CD8-positive, alpha-beta memory T cell (primary cell): ENCODE measurements at regions of chr3 and their contacts with region 1.

Region 1: GRCh38 chr3:183409219-183409618 is 19.2 kb downstream of the MCF2L2 start:
- DNase-seq: no peak
- H3K4me3 ChIP-seq: no peak overlapping the region
- H3K4me3 Mint-ChIP-seq: no peak overlapping the region
- H3K27ac ChIP-seq: no peak overlapping the region
- H3K27ac Mint-ChIP-seq: no peak overlapping the region
- H3K4me1 ChIP-seq: peaks cover 4% of the 10 kb centered on the region
- H3K4me1 Mint-ChIP-seq: peaks cover 5 to 10% (median 5%) of the 10 kb centered on the region in 3 donors
- H3K27me3 ChIP-seq: no peaks in the 10 kb centered on the region
- H3K27me3 Mint-ChIP-seq: peaks cover 0 to 1% of the 10 kb centered on the region in 2 donors

Region 2: DNA sequence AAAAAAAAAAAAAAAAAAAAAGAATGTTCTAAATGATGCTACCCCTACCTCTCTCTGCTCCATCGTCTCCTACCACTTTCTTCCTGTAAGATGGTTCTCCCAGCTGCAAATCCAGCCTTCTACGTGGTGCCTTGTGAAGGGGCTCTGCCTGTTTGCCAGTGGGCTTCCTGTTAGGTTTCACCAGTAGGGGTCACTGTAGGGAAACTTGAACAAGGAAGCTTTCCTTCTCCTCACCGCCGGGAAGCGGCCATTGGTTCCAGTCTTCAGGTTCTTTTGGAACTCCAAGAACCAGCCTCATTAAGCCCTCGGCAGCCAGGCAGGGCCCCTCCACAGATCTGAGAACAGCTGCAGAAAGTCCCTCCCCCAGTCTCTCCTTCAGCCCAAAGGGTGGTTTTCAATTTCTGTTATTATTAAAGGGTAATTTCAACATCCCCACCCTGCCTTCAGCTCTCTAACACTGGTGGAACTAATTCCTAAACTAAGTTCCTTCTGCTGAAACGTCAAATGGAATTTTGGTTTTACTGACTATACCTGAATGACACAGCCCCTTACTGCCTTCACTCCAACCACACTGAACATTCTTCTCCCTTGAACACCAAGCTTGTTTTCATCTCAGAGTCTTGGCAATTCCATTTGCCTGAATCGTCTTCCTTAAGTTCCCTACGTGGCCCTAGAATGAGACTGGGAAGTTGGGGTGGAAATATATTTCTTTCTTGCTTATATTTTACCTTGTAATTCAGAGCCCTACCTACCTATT is 323.4 kb before region 1 on chr3:
- CTCF ChIA-PET with region 1: no interaction called
- POLR2A ChIA-PET with region 1: interaction called, 10 read pairs
- DNase-seq: peak in 1 of 5 donors; percentile 48
- H3K4me3 ChIP-seq: no peak overlapping the region
- H3K4me3 Mint-ChIP-seq: no peak overlapping the region
- H3K27ac ChIP-seq: no peak overlapping the region
- H3K27ac Mint-ChIP-seq: peak overlapping the region in 1 of 8 donors; percentile 48
- H3K4me1 ChIP-seq: no peaks in the 10 kb centered on the region
- H3K4me1 Mint-ChIP-seq: peaks cover 5 to 12% (median 8%) of the 10 kb centered on the region in 3 donors
- H3K27me3 ChIP-seq: no peaks in the 10 kb centered on the region
- H3K27me3 Mint-ChIP-seq: no peaks in the 10 kb centered on the region